ENCODE measurements at regions of chr16 and their contacts with region 1.

Region 1: DNA sequence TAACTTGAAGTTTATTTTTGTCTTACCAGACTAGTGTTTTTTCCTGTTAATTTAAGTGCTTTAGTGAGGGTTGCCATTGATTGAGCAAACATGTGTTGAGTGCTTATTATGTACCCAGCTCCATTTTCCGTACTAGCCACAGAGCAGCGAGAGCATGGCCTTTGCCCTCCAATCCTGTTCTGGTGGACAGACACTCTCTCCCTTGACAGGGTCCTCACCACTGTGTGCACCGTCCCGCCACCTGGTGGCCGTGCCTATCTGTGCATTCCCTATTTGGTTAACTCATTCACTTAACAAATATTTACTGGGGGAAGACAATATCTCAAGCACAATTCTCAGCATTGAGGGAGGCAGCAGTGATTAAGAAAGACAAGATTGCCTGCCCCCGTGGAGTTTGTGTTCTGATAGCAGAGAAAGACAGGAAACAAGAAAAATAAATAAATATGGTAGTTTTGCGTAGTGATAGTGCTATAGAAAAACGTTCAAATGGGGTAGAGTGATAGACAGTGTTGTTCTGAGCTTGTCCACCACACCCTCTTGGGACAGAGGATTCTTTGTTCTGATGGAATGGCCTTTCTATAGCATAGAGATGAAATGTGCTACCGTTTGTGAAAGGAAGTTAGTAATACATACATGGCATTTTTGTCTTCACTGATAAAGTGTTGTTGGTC is 13.0 kb downstream of the CDH13 start:
- DNase-seq: peak; percentile 42
- ATAC-seq: peak; percentile 96
- H3K4me3 ChIP-seq: no peak overlapping the region
- H3K27ac ChIP-seq: no peak overlapping the region
- H3K4me1 ChIP-seq: no peaks in the 10 kb centered on the region
- H3K27me3 ChIP-seq: no peaks in the 10 kb centered on the region
- CTCF ChIP-seq: peak; percentile 67 to 99 (median 98)
- POLR2A ChIP-seq: no peak
- RAD21 ChIP-seq: peak; percentile 58

Region 2: DNA sequence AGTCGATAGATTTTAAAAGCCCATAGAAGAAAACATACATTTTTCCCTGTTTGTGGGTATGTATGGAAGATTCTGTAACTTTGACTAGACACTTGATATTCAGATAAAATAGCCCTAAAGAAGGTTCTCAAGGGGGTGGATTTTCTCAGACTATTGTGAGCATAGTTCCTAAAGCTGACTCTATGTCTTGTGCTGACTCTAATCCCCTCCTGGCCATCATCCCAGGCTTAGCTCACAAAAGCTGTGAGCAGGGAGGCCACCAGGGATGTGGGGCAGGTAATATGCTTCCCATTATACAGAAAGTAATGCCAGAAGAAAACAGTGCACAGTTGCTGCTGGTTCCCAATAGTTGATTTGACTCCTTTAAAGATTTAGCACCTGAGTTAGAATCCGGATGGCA is 19.0 kb after region 1 on chr16:
- CTCF ChIA-PET with region 1: no interaction called
- POLR2A ChIA-PET with region 1: no interaction called
- RAD21 ChIA-PET with region 1: no interaction called
- intact Hi-C with region 1: no loop called
- DNase-seq: no peak
- ATAC-seq: no peak
- H3K4me3 ChIP-seq: no peak overlapping the region
- H3K27ac ChIP-seq: no peak overlapping the region
- H3K4me1 ChIP-seq: peaks cover 7 to 17% of the 10 kb centered on the region in 2 experiments
- H3K27me3 ChIP-seq: peaks cover 15% of the 10 kb centered on the region; the same call in 1 of the 2 replicates
- CTCF ChIP-seq: no peak
- POLR2A ChIP-seq: no peak
- RAD21 ChIP-seq: no peak

Region 3: DNA sequence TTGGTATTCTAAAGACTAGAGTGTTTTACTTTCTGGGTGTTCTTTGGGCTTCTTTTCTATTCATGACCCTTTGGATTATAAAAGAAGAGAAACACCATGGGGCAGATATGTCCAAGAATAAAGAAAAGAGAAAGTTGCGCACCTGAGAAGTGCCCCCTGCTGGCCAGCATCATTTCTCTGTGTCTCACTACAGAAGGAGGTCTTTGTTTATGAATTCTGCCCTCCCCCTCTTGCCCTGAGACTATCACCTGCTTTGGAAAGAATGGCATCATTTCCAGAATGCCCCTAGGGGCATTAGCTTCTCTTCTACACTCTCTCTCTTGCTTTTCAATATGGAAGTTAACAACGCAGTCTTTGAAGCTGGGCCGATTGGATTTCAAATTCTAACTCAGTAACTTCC is 31.9 kb after region 1 on chr16:
- CTCF ChIA-PET with region 1: no interaction called
- POLR2A ChIA-PET with region 1: no interaction called
- RAD21 ChIA-PET with region 1: no interaction called
- intact Hi-C with region 1: loop called (anchors 1 kb)
- DNase-seq: no peak
- ATAC-seq: peak; percentile 83
- H3K4me3 ChIP-seq: no peak overlapping the region
- H3K27ac ChIP-seq: no peak overlapping the region
- H3K4me1 ChIP-seq: no peaks in the 10 kb centered on the region
- H3K27me3 ChIP-seq: peaks cover 39% of the 10 kb centered on the region; the same call in 1 of the 2 replicates
- CTCF ChIP-seq: peak; percentile 33 to 81 (median 77); a peak in 5 of 6 replicates
- POLR2A ChIP-seq: no peak
- RAD21 ChIP-seq: peak; percentile 52

Region 4: DNA sequence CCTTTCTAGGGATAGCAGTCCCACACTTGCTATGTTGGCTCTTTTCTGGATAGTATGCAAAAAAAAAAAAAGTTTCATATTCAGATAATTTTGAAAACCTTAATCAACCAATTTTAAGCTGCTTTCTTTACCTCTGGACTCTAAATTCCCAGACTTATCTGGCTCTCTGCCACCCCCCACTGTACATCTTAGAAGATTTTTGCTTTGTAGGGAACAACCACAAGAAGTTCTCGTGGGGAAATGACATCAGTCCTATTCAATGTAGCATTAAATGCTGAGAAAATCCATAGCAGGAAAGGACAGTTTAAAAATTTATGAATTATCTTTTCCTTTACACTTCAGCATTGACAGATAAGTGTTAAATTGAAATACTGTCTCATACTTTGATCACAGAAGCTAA is 605.3 kb after region 1 on chr16:
- CTCF ChIA-PET with region 1: no interaction called
- POLR2A ChIA-PET with region 1: no interaction called
- RAD21 ChIA-PET with region 1: no interaction called
- intact Hi-C with region 1: no loop called
- DNase-seq: no peak
- ATAC-seq: no peak
- H3K4me3 ChIP-seq: no peak overlapping the region
- H3K27ac ChIP-seq: no peak overlapping the region
- H3K4me1 ChIP-seq: no peaks in the 10 kb centered on the region
- H3K27me3 ChIP-seq: no peaks in the 10 kb centered on the region
- CTCF ChIP-seq: no peak
- POLR2A ChIP-seq: no peak
- RAD21 ChIP-seq: no peak

Region 5: GRCh38 chr16:83441517-83441916 is 801.7 kb after region 1 on chr16:
- CTCF ChIA-PET with region 1: interaction called, 3 read pairs
- POLR2A ChIA-PET with region 1: no interaction called
- RAD21 ChIA-PET with region 1: no interaction called
- intact Hi-C with region 1: loop called (anchors 10 kb)
- DNase-seq: no peak
- ATAC-seq: no peak
- H3K4me3 ChIP-seq: no peak overlapping the region
- H3K27ac ChIP-seq: no peak overlapping the region
- H3K4me1 ChIP-seq: no peaks in the 10 kb centered on the region
- H3K27me3 ChIP-seq: no peaks in the 10 kb centered on the region
- CTCF ChIP-seq: no peak
- POLR2A ChIP-seq: no peak
- RAD21 ChIP-seq: no peak

Measured in HCT116 (cell line).